Esophagus muscularis mucosa (tissue), 4 donors: ENCODE measurements at regions of chr5 and their contacts with region 1.

Region 1: GRCh38 chr5:90434116-90434714 is 24.7 kb upstream of the CETN3 start:
- DNase-seq: no peak
- H3K4me3 ChIP-seq: no peak overlapping the region
- H3K27ac ChIP-seq: no peak overlapping the region
- H3K4me1 ChIP-seq: no peaks in the 10 kb centered on the region
- H3K27me3 ChIP-seq: no peaks in the 10 kb centered on the region
- CTCF ChIP-seq: peak; percentile 34 to 57 (median 48)
- EP300 ChIP-seq: no peak
- POLR2A ChIP-seq: no peak

Region 2: DNA sequence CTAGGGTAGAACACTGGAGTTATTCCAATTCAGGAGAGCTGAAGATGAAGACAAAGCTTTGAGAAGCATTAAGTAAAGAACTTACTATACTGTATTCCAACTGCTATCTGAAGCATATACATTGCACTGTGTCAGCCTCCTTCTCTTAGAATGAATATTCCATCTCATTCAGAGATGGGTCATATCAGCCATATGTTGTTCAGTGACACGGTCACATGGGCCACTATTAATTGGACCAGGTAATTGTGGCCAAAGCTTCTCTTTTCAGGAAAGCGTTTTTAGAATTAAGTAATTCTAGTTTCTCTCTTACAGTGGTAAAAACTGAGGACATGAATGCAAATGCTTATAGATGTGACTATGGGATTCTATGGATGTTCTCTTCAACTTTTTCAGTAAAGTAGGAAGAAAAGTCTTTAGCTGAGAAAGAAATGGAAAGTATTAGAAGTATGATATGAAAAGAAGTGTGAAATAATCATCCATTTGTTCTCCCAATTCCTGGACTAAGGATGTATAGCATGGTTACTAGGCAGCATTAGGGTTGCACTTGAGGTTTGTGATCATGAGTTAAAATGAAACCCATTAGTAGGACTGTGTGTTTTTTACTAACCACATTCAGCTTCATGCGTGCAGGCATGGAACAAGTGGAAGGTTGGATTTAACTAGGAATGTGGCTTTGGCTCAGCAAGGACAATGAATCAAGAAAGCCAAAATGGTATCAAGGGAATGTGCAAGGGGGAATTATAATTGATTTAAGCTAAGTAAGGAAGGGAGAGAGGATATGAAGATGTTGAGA is 65.6 kb before region 1 on chr5:
- intact Hi-C with region 1: no loop called
- DNase-seq: no peak
- H3K4me3 ChIP-seq: no peak overlapping the region
- H3K27ac ChIP-seq: no peak overlapping the region
- H3K4me1 ChIP-seq: no peaks in the 10 kb centered on the region
- H3K27me3 ChIP-seq: no peaks in the 10 kb centered on the region
- CTCF ChIP-seq: no peak
- EP300 ChIP-seq: no peak
- POLR2A ChIP-seq: no peak

Region 3: DNA sequence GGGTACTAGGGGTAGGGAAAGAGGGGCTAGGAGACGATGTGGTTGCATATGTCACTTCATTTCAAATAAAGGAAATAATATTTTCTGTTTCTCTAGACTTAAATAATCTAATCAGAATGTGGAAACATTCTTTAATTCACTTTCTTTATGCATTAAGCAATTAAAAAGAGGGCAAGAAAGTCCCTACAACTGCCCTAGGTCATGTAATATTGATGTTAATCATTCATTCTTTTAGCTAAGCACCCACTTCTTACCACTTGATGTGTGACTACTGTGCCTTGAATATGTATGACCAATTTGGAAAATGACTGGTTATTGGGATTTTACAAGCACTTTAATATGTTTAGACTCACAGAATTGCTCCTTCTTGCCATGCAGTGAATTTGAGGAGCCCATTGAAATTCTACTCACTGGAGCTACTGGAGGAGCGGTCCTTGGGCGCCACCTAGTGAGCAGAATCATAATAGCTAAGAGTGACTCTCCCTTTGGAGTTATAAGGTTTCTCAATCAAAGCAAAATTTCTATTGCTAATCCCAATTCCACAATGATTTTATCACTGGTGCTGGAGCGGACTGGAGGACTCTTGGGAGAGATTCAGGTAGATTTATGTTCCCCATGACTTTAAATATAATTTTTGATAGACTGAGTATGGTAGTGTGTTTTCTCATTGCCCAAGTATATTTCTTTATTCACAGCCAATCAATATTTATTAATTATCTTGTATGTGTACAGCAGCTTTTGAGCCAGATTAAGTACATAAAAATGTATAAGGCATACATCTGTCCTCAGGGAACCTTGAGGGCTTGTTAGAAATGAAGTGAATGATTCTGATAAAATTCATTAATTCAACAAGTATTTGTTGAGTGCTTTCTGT is 349.5 kb after region 1 on chr5:
- intact Hi-C with region 1: loop called (anchors 10 kb)
- DNase-seq: no peak
- H3K4me3 ChIP-seq: no peak overlapping the region
- H3K27ac ChIP-seq: no peak overlapping the region
- H3K4me1 ChIP-seq: no peaks in the 10 kb centered on the region
- H3K27me3 ChIP-seq: no peaks in the 10 kb centered on the region
- CTCF ChIP-seq: peak; percentile 61 to 83 (median 78)
- EP300 ChIP-seq: no peak
- POLR2A ChIP-seq: no peak